ENCODE measurements at regions of chr2 and their contacts with region 1.

Region 1: DNA sequence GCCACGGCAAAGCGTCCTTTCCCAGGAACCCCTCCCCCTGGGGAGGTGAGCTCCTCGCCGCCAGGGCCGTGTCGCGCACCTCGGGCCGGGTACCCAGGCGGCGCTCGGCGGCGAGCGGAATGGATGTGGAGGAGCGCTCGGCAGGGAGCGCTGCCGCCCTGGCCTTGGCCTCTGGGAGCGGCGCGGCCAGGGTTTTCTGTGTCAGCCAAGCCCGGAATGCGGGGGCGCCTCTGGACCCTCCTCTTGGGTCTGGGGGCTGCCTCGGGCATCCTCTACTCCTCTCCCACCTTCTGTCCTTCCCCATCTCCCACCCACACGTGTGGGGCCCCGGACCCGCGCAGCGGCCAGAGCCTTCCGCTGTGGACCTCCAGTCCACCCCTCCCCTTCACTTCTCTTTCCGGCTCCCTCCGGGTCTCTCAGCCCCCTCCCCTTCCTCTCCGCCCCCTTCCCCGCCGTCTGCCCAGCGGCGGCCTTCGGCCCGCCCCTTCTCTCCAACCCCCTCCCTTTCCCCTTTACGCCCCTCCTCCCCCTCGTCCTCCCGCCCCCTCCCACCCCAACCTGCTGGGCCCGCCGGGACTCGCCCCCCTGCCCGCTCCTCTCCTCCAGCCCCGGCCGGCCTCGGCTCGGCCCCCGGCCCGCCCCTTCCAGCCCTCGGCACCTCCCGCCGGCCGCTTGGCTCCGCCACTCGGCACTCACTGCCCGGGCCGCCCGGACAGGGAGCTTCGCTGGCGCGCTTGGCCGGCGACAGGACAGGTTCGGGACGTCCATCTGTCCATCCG is at the start of gene MERTK:
- DNase-seq: peak; percentile 99
- H3K4me3 ChIP-seq: peak within 1 kb of the TSS; percentile 68 to 90
- H3K27ac ChIP-seq: peak within 1 kb of the TSS; percentile 50 to 88
- H3K4me1 ChIP-seq: peaks cover 0 to 11% of the 10 kb centered on the region in 2 experiments; a peak in 1 of 4 replicates
- H3K27me3 ChIP-seq: no peaks in the 10 kb centered on the region; the same call in 1 of the 2 replicates
- CTCF ChIP-seq: peak; percentile 62
- EP300 ChIP-seq: 0 out of 4 replicates have a peak, but pooled peaks of 1 of the 2 experiments have one; percentile 2
- RAD21 ChIP-seq: peak; percentile 63
- polyA plus RNA-seq, gene MERTK: 9.6 and 12.4 TPM in 2 replicates

Region 2: GRCh38 chr2:110960954-110961353 is 937.2 kb before region 1 on chr2:
- CTCF ChIA-PET with region 1: no interaction called
- POLR2A ChIA-PET with region 1: no interaction called
- DNase-seq: no peak
- H3K4me3 ChIP-seq: no peak overlapping the region
- H3K27ac ChIP-seq: no peak overlapping the region
- H3K4me1 ChIP-seq: no peaks in the 10 kb centered on the region; a peak in 1 of 4 replicates
- H3K27me3 ChIP-seq: peaks cover 5% of the 10 kb centered on the region; the same call in 1 of the 2 replicates
- CTCF ChIP-seq: no peak
- EP300 ChIP-seq: no peak
- RAD21 ChIP-seq: no peak

Region 3: GRCh38 chr2:111634050-111634794 is 263.9 kb before region 1 on chr2:
- CTCF ChIA-PET with region 1: no interaction called
- POLR2A ChIA-PET with region 1: no interaction called
- DNase-seq: no peak
- H3K4me3 ChIP-seq: no peak overlapping the region; a peak in 1 of 4 replicates
- H3K27ac ChIP-seq: peak overlapping the region in 1 of 2 experiments; percentile 50; a peak in 2 of 4 replicates
- H3K4me1 ChIP-seq: peaks cover 0 to 7% of the 10 kb centered on the region in 2 experiments; a peak in 2 of 4 replicates
- H3K27me3 ChIP-seq: no peaks in the 10 kb centered on the region
- CTCF ChIP-seq: no peak
- EP300 ChIP-seq: no peak
- RAD21 ChIP-seq: no peak

Region 4: GRCh38 chr2:112054847-112055729 is 157.0 kb after region 1 on chr2 and contains the start of gene TMEM87B:
- CTCF ChIA-PET with region 1: interaction called, 215 read pairs
- POLR2A ChIA-PET with region 1: interaction called, 3 read pairs
- DNase-seq: peak; percentile 96
- H3K4me3 ChIP-seq: peak within 1 kb of the TSS; percentile 83 to 88
- H3K27ac ChIP-seq: peak within 1 kb of the TSS; percentile 91 to 93
- H3K4me1 ChIP-seq: peaks cover 15 to 18% of the 10 kb centered on the region in 2 experiments
- H3K27me3 ChIP-seq: no peaks in the 10 kb centered on the region
- CTCF ChIP-seq: no peak
- EP300 ChIP-seq: no peak; a peak in 1 of 4 replicates
- RAD21 ChIP-seq: no peak
- polyA plus RNA-seq, gene TMEM87B: 7.9 and 11.3 TPM in 2 replicates

Measured in SK-N-SH (cell line).